ENCODE measurements at regions of chr19 and their contacts with region 1.

Region 1: DNA sequence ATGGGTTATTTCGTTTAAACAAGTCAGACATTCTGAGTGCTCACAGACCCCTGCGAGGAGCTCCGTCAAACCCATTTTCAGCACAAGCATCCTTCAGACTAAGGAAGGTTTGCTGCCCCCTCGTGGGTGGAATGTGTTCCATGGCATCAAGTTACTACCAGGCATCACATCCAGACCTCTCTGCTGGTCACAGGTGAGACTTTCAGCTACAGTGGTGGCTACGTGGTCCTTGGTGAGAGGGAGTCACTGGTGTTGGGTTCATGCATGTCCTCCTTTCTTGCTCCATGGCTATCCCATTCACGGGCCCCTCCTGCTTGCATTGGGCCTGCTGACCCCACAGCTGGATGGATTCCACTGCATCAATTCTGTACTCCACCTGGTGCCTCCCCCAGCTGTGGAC is 9.1 kb upstream of the LILRB5 start:
- DNase-seq: peak; percentile 98
- ATAC-seq: peak; percentile 99
- H3K4me3 Mint-ChIP-seq: no peak overlapping the region
- H3K27ac Mint-ChIP-seq: no peak overlapping the region
- H3K4me1 Mint-ChIP-seq: peaks cover 3% of the 10 kb centered on the region; the same call in 1 of the 2 replicates
- H3K27me3 Mint-ChIP-seq: peaks cover 36% of the 10 kb centered on the region
- CTCF ChIP-seq: peak; percentile 93

Region 2: DNA sequence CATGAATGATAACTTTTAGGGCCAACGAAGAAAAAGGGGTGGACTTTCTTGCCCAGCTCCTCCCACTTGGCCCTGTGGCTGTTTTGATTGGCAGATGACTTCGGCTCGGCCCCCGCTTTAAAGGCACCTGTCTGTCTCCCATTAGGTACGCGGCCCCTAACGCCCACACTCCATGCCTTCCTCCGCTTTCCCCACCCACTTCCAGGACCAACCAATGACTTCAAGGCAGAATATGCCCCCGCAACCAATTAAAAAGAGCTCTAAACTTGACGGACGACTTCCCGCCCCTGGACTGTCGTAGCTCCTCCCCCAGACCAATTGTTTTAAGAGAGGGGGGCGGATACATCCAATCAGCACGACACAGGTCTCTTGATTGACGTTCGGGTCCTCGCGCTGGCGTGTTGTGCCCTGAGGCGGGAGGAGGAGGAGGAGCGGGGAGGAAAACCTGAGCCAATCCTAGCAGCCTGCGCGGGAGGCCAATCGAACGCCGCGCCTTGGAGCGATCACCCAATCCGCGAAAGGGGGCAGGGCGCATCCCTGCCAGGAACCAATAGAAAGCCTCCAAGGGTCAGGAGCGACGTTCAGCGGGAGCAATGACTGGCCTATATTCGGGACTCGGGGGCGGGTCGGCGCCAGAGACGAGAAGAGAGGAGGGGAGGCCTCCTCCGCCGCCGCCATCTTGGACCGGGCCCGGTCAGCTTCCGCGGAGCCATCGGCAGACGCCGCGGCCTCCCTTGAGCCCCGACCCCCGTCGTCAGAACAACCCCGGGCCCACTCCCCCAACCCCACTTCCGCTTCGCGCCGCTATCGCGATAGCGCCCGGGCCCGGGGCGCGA is 128.8 kb before region 1 on chr19 and contains the start of gene CNOT3:
- CTCF ChIA-PET with region 1: interaction called, 16 read pairs
- POLR2A ChIA-PET with region 1: no interaction called
- DNase-seq: peak; percentile 100
- ATAC-seq: peak; percentile 89
- H3K4me3 Mint-ChIP-seq: peak within 1 kb of the TSS; percentile 92
- H3K27ac Mint-ChIP-seq: peak within 1 kb of the TSS; percentile 98
- H3K4me1 Mint-ChIP-seq: peaks cover 35% of the 10 kb centered on the region
- H3K27me3 Mint-ChIP-seq: no peaks in the 10 kb centered on the region
- CTCF ChIP-seq: no peak
- total RNA-seq, gene CNOT3: 90.7 to 96.8 TPM (median 93.3 TPM) in 3 replicates

Region 3: GRCh38 chr19:54179921-54180461 is 86.1 kb before region 1 on chr19:
- CTCF ChIA-PET with region 1: interaction called, 13 read pairs
- POLR2A ChIA-PET with region 1: no interaction called
- DNase-seq: peak; percentile 94
- ATAC-seq: peak; percentile 95
- H3K4me3 Mint-ChIP-seq: no peak overlapping the region
- H3K27ac Mint-ChIP-seq: peak overlapping the region; percentile 63
- H3K4me1 Mint-ChIP-seq: peaks cover 14% of the 10 kb centered on the region
- H3K27me3 Mint-ChIP-seq: no peaks in the 10 kb centered on the region
- CTCF ChIP-seq: no peak

Region 4: GRCh38 chr19:54209811-54210494 is 56.2 kb before region 1 on chr19:
- CTCF ChIA-PET with region 1: interaction called, 14 read pairs
- POLR2A ChIA-PET with region 1: interaction called, 4 read pairs
- DNase-seq: no peak
- ATAC-seq: peak; percentile 6
- H3K4me3 Mint-ChIP-seq: no peak overlapping the region
- H3K27ac Mint-ChIP-seq: peak overlapping the region; percentile 52
- H3K4me1 Mint-ChIP-seq: peaks cover 28% of the 10 kb centered on the region
- H3K27me3 Mint-ChIP-seq: no peaks in the 10 kb centered on the region; the same call in 1 of the 2 replicates
- CTCF ChIP-seq: no peak

Region 5: DNA sequence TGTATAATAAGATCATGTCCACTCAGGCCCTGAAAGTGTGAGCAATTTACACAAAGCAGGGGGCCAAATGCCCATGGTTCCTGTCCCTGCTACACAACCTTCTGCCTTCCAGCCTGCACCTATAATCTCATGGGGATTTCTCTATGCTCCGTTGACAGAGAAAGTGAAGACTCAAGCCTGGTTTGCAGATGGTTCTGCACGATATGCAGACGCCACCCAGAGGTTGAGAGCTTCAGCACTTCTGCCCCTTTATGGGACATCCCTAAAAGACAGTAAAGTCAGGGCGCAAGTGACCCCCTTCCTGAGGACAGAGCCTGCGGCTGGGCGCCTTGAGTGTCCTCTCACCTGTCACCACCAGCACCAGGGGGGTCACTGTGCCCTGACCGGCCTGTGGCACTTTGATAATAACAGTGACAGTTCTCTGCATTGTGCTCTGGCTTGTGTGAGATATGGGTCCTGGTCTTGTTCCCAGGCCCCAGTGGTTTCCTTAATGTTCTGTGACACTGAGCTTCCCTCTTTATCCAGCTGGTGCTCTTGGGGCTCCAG is 31.7 kb after region 1 on chr19:
- CTCF ChIA-PET with region 1: interaction called, 28 read pairs
- POLR2A ChIA-PET with region 1: no interaction called
- DNase-seq: no peak
- ATAC-seq: peak; percentile 62
- H3K4me3 Mint-ChIP-seq: no peak overlapping the region
- H3K27ac Mint-ChIP-seq: no peak overlapping the region
- H3K4me1 Mint-ChIP-seq: peaks cover 4% of the 10 kb centered on the region
- H3K27me3 Mint-ChIP-seq: peaks cover 56% of the 10 kb centered on the region
- CTCF ChIP-seq: no peak

Region 6: DNA sequence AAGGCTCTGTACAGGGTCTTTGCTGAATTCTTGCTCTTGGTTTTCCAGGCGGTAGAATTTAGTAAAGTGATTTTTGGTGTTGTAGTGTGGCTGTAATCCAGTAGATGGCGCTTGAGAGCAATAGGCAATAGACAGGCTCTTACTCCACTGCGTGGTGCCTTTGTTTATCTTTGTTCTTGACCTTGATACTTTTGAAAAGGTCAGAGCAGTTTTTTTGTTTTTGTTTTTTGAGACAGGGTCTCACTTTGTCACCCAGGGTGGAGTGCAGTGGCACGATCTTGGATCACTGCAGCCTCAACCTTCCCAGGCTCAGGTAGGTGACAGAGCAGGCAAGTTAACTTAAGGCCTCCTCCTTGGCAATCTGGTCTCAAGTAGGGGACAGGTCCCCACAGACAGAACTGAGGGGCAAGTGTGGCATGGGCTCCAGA is 59.1 kb after region 1 on chr19:
- CTCF ChIA-PET with region 1: interaction called, 32 read pairs
- POLR2A ChIA-PET with region 1: no interaction called
- DNase-seq: peak; percentile 46
- ATAC-seq: peak; percentile 72
- H3K4me3 Mint-ChIP-seq: no peak overlapping the region
- H3K27ac Mint-ChIP-seq: no peak overlapping the region; the same call in 1 of the 2 replicates
- H3K4me1 Mint-ChIP-seq: peaks cover 24% of the 10 kb centered on the region
- H3K27me3 Mint-ChIP-seq: peaks cover 54% of the 10 kb centered on the region
- CTCF ChIP-seq: peak; percentile 75

Region 7: DNA sequence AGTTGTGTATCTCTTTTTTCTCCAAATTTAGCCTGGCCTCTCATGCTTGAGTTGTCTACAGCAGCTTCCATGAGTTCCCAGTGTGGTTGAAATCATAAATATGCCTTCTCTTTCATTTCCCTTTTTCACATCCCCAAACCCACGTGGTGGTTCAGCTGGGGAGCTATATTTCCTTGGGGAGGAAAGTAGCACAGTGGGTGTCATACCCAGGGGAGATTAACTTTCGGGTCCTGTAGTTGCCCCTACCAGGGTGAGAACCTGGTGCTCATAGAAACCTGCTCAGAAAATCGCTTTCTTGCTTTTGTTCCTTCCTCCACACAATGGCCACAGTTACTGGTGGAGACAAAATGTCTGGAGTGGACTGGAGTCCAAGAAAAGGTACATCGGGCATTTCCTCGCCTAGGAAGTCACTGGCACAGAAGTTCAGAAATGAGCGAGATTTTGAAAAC is 79.8 kb after region 1 on chr19:
- CTCF ChIA-PET with region 1: no interaction called
- POLR2A ChIA-PET with region 1: no interaction called
- DNase-seq: no peak
- ATAC-seq: no peak
- H3K4me3 Mint-ChIP-seq: no peak overlapping the region
- H3K27ac Mint-ChIP-seq: no peak overlapping the region
- H3K4me1 Mint-ChIP-seq: no peaks in the 10 kb centered on the region
- H3K27me3 Mint-ChIP-seq: peaks cover 31% of the 10 kb centered on the region
- CTCF ChIP-seq: no peak

Region 8: GRCh38 chr19:54418030-54418929 is 152.1 kb after region 1 on chr19:
- CTCF ChIA-PET with region 1: interaction called, 12 read pairs
- POLR2A ChIA-PET with region 1: no interaction called
- DNase-seq: no peak
- ATAC-seq: no peak
- H3K4me3 Mint-ChIP-seq: peak overlapping the region; percentile 51
- H3K27ac Mint-ChIP-seq: peak overlapping the region; percentile 43
- H3K4me1 Mint-ChIP-seq: peaks cover 45% of the 10 kb centered on the region
- H3K27me3 Mint-ChIP-seq: peaks cover 33% of the 10 kb centered on the region
- CTCF ChIP-seq: no peak